Dorsolateral prefrontal cortex (tissue), 120 donors: ENCODE measurements at regions of chr1 and their contacts with region 1.

Region 1: DNA sequence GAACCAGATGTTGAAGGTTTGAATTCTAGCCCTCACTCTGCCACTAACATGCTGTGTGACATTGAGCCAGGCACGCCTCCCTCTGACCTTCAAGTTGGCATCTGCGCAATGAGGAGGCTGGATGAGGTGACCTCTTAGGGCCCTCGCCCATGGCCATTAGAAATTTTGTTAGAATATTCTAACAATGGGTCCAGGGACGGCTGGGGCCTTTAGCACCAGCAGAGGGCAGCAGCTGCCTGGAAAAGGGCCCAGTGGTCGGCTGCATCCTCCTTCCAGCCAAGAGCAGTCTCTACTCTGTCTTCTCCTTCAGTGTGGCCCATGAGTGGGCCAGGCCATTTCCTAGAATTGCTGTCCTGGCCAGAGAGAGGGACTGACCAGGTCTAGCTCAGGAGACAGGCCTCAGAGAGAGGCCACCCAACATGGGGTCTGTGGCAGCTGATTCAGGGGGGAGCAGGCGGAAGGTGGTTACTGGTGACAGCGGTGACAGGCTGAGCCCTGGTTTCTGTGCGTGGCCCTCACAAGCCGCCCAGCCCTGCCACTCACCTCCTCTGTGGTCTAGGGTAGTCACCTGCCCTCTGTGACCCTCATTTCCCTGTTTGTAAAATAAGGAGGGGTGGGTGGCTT is 101.3 kb upstream of the ACTL8 start:
- DNase-seq: peak in 9 of 10 donors; percentile 50 to 76 (median 62)
- H3K4me3 ChIP-seq: no peak overlapping the region
- H3K27ac ChIP-seq: peak overlapping the region in 8 of 59 donors; percentile 4 to 53 (median 18)
- H3K27me3 ChIP-seq: no peaks in the 10 kb centered on the region
- CTCF ChIP-seq: peak; percentile 42 to 84 (median 72)

Region 2: GRCh38 chr1:17732475-17732874 is 78.6 kb after region 1 on chr1:
- intact Hi-C with region 1: no loop called
- DNase-seq: no peak
- H3K4me3 ChIP-seq: no peak overlapping the region
- H3K27ac ChIP-seq: no peak overlapping the region
- H3K27me3 ChIP-seq: peaks cover 0 to 4% (median 0%) of the 10 kb centered on the region in 45 donors
- CTCF ChIP-seq: no peak

Region 3: DNA sequence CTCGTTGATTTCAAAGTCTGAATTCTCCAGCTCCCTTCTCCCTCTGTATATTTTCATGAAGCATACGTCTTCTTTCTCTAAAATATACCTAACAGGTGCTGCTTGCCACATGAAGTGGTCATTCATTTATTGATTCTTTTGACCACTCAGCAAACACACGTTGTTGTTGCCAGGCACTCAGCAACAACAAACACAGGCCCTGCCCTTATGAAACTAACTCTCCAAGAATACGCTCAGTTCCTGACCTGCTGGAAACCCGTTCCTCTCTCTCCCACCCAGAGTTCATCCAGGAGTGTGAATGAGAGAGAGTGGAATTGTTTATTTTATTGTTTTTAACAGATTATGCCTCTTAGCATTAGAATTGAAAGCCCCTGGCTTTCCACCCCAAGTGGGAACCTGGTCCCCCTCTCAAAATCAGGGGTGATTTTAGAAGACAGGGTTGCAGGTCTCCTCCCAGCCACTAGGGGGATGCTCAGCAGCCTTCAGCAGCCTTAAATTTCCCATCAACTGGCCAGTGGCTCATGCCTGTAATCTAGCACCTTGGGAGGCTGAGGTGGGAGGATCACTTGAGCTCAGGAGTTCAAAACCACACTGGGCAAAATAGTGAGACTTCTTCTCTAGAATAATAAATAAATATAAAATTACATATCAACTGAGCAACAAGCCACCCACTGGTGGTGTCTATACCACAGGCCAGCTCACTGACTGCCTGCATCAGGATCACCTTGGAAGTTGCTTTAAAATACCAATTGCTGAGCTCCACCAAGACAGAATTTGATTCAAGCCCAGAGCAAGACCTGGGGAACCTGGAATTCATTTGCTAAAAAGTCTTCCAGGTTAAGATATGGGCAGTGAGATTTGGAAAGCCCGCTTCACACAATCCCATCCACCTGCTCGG is 645.9 kb after region 1 on chr1:
- intact Hi-C with region 1: loop called in 1 of 2 experiments (anchors 10 kb)
- DNase-seq: no peak
- H3K4me3 ChIP-seq: no peak overlapping the region
- H3K27ac ChIP-seq: no peak overlapping the region
- H3K27me3 ChIP-seq: peaks cover 0 to 7% (median 0%) of the 10 kb centered on the region in 45 donors
- CTCF ChIP-seq: peak in 54 of 56 donors; percentile 17 to 66 (median 51)

Region 4: DNA sequence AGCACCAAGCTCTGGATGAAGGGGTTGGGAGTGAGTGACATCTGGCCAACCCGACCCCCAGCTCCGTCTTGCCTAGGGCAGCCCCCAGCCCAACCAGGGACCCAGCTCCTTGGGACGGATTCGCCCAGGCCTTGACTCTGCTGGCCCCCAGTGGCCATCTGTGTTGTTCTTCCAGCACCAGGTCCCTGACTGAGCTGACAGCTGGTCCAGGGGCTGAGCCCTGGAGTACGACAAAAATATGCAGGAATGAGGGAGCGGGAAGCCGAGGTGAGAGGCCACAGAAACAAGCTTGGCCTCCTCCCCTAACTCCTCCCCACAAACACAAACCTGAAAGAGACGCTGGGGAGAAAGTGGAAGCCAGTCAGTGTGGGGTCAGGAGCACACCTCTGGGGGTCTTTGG is 921.8 kb after region 1 on chr1:
- intact Hi-C with region 1: loop called in 1 of 2 experiments (anchors 10 kb)
- DNase-seq: peak in 6 of 10 donors; percentile 38 to 75 (median 62)
- H3K4me3 ChIP-seq: no peak overlapping the region
- H3K27ac ChIP-seq: no peak overlapping the region
- H3K27me3 ChIP-seq: peaks cover 0 to 16% (median 0%) of the 10 kb centered on the region in 45 donors
- CTCF ChIP-seq: peak in 44 of 56 donors; percentile 21 to 89 (median 64)